Activated T-helper 1 cell treated with anti-CD3 and anti-CD28 coated beads, Interleukin-12 subunit alpha, Interleukin-12 subunit beta, Interleukin-2, Interleukin-4 antibody, amounts not matched to agents 30 ng/mL and 10 ng/mL and 1 ng/mL, durations not matched to agents 14 hours and 24 hours and 36 hours (primary cell): ENCODE measurements at regions of chr3 and their contacts with region 1.

Region 1: DNA sequence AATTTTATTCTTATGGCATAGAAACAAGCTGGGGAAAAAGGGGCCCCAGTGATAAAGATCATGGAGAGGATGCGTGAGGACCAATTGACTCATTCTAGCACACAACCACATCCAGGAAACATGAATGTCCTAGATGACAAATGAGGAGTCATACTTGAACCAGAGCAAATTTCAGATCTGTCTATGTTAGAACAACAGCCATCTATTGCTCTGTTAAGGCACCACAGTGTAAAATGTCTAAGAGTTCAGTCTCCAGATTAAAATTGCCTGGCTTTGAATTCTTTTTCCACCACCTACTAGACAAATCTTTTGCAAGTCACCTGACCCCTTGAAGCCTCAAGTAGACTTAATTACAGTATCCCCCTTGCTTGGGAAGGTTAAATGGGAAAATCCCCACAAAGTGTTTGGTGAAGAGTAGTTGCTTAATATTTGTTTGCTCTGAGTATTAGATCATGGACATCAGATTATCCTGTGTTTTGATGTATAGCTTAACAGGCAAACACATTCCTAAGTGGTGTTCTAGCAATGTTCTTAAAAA is 258.7 kb upstream of the TGFBR2 start:
- DNase-seq: peak; percentile 46
- H3K4me3 Mint-ChIP-seq: peak overlapping the region; percentile 56
- H3K27ac Mint-ChIP-seq: peak overlapping the region; percentile 74
- H3K4me1 Mint-ChIP-seq: peaks cover 85% of the 10 kb centered on the region
- H3K27me3 Mint-ChIP-seq: peaks cover 4% of the 10 kb centered on the region

Region 2: GRCh38 chr3:29026286-29026685 is 1321.5 kb before region 1 on chr3:
- intact Hi-C with region 1: loop called (anchors 2 kb)
- DNase-seq: no peak
- H3K4me3 Mint-ChIP-seq: no peak overlapping the region
- H3K27ac Mint-ChIP-seq: peak overlapping the region; percentile 7
- H3K4me1 Mint-ChIP-seq: peaks cover 10% of the 10 kb centered on the region
- H3K27me3 Mint-ChIP-seq: no peaks in the 10 kb centered on the region

Region 3: DNA sequence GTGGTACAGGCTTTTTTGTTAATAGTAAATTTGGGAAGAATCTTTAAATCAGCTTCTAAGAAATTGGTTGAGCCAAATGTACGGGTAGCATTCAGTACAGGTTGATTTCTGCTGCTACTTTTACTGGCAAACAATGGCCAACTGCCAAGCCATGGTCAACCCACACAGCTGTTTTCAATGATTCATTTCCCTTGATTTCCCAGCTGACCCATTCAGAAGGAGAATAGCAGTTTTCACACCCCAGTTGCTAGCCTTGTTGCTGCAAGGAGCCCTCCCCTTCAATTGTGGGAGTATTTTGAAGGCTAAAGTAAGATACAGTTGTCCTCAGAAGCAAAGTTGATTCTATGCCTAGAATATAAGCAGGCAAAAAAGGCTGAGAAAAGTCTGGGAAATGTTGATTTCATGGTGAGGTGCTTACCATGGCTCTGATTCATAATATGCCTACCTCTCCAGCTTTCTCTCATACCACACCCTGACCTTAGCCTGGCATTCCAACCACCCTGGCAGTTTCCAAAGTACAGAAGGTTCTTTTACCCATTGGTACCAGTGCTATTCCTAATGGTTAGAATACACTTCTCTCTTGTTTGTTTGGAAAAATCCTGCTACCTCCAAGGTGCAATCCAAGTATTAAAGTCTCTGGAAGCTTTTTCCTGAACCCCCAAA is 61.6 kb before region 1 on chr3:
- intact Hi-C with region 1: loop called (anchors 2 kb)
- DNase-seq: no peak
- H3K4me3 Mint-ChIP-seq: no peak overlapping the region
- H3K27ac Mint-ChIP-seq: peak overlapping the region; percentile 3
- H3K4me1 Mint-ChIP-seq: peaks cover 57% of the 10 kb centered on the region
- H3K27me3 Mint-ChIP-seq: no peaks in the 10 kb centered on the region

Region 4: DNA sequence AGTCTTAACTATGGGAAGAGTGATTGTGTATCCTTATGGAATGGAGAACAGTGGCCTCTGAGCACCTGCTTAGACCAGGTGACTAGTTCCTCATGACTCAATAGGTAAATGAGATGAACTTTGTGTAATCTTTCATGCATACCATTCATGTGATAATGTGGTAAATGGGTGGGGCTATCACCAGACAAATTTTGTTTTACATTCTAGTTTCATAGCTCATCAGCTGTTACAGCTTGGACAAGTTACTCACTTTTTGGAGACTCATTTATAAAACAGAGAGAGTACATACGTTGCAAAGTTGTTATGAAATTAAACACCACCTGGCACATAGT is 155.0 kb after region 1 on chr3:
- intact Hi-C with region 1: loop called (anchors 1 kb)
- DNase-seq: no peak
- H3K4me3 Mint-ChIP-seq: no peak overlapping the region
- H3K27ac Mint-ChIP-seq: no peak overlapping the region
- H3K4me1 Mint-ChIP-seq: peaks cover 35% of the 10 kb centered on the region
- H3K27me3 Mint-ChIP-seq: no peaks in the 10 kb centered on the region

Region 5: GRCh38 chr3:30623351-30623750 is 275.6 kb after region 1 on chr3:
- intact Hi-C with region 1: loop called (anchors 1 kb)
- DNase-seq: no peak
- H3K4me3 Mint-ChIP-seq: peak overlapping the region; percentile 66
- H3K27ac Mint-ChIP-seq: peak overlapping the region; percentile 90
- H3K4me1 Mint-ChIP-seq: peaks cover 83% of the 10 kb centered on the region
- H3K27me3 Mint-ChIP-seq: no peaks in the 10 kb centered on the region

Region 6: DNA sequence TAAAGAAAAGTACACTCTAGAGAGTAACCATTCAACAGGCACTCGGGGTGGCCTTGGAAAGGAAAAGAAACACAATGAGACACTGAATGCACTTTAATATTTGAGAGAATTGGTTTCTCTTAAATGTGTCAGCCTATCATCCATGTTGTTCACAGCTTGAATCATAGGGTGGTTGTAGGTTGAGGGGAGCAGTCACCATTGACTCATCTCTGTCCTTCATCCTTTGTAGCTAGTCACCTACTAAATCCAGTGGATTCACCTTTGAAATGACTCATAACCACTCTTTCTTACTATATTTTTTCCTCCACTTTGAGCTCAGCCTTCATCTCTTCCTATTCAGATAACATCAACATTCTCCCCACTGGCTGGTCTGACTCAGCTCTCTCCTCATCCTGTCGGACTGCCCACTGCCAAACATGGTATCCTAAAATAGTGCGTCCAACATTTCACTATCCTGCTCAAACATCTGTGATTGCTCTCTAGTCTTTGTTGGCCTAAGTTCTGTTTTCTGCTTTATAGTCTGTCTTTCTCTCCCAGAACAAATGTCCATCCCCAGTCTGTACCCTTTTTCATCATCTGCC is 729.4 kb after region 1 on chr3:
- intact Hi-C with region 1: loop called (anchors 1 kb)
- DNase-seq: peak; percentile 35
- H3K4me3 Mint-ChIP-seq: peak overlapping the region; percentile 38
- H3K27ac Mint-ChIP-seq: peak overlapping the region; percentile 85
- H3K4me1 Mint-ChIP-seq: peaks cover 46% of the 10 kb centered on the region
- H3K27me3 Mint-ChIP-seq: peaks cover 3% of the 10 kb centered on the region

Region 7: GRCh38 chr3:31754575-31755278 is 1407.0 kb after region 1 on chr3:
- intact Hi-C with region 1: loop called (anchors 5 kb)
- DNase-seq: no peak
- H3K4me3 Mint-ChIP-seq: peak overlapping the region; percentile 66
- H3K27ac Mint-ChIP-seq: peak overlapping the region; percentile 94
- H3K4me1 Mint-ChIP-seq: peaks cover 61% of the 10 kb centered on the region
- H3K27me3 Mint-ChIP-seq: no peaks in the 10 kb centered on the region